GM18951 (cell line): ENCODE measurements at regions of chr3 and their contacts with region 1.

Region 1: GRCh38 chr3:155701882-155702465 is 42.9 kb downstream of the PLCH1 start:
- POLR2A ChIP-seq: no peak

Region 2: GRCh38 chr3:155382396-155383042 is 319.5 kb before region 1 on chr3:
- in situ Hi-C with region 1: loop called (anchors 25 kb)
- POLR2A ChIP-seq: no peak

Region 3: DNA sequence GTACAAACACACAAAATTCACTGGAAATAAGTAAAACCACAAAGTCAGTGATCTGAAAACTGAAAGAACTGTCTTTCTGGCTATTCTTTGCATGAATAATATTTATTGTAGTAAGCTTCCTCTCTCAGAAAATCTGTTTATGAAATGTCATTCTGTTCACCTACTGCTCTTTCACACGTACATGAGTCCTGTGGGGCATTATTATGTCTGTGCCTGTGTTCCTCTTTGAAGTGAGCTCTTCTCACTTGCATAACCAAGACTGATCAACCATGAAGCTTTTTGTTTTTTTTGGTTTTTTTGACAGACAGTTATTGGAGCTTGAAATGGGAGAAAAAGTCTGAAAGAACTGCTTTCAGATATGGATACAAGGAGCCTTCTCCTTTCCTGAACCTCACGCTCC is 152.9 kb before region 1 on chr3:
- in situ Hi-C with region 1: no loop called
- POLR2A ChIP-seq: no peak